ENCODE measurements at regions of chr2 and their contacts with region 1.

Region 1: GRCh38 chr2:55050133-55050994 is at the start of gene RTN4:
- DNase-seq: peak; percentile 99
- H3K4me3 Mint-ChIP-seq: peak within 1 kb of the TSS; percentile 98
- H3K27ac Mint-ChIP-seq: peak within 1 kb of the TSS; percentile 98
- H3K4me1 Mint-ChIP-seq: peaks cover 69% of the 10 kb centered on the region
- H3K27me3 Mint-ChIP-seq: no peaks in the 10 kb centered on the region
- total RNA-seq, gene RTN4: 81.2 and 83.0 TPM in 2 replicates

Region 2: DNA sequence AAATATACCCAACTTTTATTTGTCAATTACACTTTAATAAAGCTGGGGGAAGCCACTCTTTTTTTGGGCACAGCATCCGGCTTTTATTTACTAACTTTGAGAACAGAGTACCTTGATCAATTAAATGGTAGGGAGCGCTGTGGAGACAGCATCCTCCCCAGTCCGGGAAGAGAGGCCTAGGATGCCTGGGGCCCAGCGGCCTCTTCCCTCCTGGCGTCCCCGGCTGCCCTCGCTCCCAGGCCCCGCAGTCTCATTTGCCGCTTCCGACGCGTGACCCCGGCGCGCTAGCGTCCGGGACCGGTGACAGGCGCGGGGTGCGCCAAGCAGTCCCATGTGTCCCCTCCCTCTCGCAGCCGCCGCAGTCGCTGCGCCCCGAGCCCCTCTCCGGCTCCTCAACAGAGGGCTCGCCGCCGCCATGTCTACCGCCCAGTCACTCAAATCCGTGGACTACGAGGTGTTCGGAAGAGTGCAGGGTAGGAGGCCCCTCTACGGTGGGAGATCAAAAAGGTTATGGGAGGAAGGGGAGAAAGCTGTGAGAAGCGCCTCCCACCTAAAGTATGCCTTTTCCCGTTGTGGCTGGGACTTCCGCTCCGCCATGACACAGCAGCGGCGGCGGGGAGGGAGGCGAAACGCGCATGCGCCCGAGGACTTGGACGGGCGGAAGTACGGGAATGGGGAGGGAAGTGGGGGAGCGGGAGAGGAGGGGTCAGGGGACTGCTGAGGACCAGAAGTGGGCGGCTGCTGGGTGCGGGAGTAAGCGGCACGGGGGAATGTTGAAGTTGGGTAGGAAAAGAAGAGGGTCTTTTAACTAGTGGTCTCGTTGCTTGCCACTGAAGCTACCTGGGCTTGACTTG is 934.9 kb before region 1 on chr2 and contains the start of gene ACYP2:
- intact Hi-C with region 1: loop called (anchors 1 kb)
- DNase-seq: peak; percentile 88
- H3K4me3 Mint-ChIP-seq: peak within 1 kb of the TSS; percentile 92
- H3K27ac Mint-ChIP-seq: peak within 1 kb of the TSS; percentile 97
- H3K4me1 Mint-ChIP-seq: peaks cover 14% of the 10 kb centered on the region
- H3K27me3 Mint-ChIP-seq: peaks cover 7% of the 10 kb centered on the region
- total RNA-seq, gene ACYP2: 5.2 and 5.9 TPM in 2 replicates

Region 3: DNA sequence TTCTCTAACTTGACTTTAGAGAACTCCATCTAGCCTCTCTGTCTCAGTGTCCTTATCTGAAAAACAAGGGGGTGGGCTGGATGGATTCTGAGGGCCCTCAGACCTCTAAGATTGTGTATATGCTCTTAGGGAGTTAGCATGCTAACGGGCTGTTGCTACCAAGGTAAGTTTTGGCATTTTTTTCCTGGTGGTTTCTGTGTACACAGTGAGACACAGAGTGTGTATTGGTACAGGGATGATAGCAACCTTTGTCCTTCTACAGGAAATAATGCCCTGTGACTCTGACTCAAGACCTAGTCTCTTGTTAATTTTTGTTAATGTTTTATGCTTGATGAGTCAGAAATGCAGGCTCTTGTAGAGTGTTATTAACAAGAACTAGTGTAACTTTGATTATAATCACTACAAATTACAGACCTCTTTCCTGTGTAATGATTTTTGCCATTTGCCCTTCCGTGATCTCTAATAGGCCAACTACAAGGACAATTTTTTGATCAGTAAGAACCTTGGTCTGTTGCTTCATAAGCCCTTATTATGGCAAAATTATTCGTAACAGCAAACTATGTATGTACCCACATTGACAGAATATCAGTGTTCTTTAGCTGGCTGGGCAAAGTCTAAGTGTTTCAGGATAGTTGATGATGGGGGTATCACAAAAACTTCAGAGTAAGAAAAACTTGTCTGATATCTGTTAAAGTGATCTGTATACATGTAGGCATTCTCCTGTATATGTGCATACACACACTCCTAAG is 504.5 kb before region 1 on chr2:
- intact Hi-C with region 1: no loop called
- DNase-seq: no peak
- H3K4me3 Mint-ChIP-seq: no peak overlapping the region
- H3K27ac Mint-ChIP-seq: no peak overlapping the region
- H3K4me1 Mint-ChIP-seq: peaks cover 29% of the 10 kb centered on the region
- H3K27me3 Mint-ChIP-seq: peaks cover 3% of the 10 kb centered on the region

Region 4: GRCh38 chr2:54899576-54900200 is 150.7 kb before region 1 on chr2:
- intact Hi-C with region 1: loop called (anchors 5 kb)
- DNase-seq: no peak
- H3K4me3 Mint-ChIP-seq: no peak overlapping the region
- H3K27ac Mint-ChIP-seq: no peak overlapping the region
- H3K4me1 Mint-ChIP-seq: peaks cover 24% of the 10 kb centered on the region
- H3K27me3 Mint-ChIP-seq: no peaks in the 10 kb centered on the region

Region 5: GRCh38 chr2:55168221-55169154 is 118.1 kb after region 1 on chr2:
- intact Hi-C with region 1: loop called (anchors 1 kb)
- DNase-seq: peak; percentile 10
- H3K4me3 Mint-ChIP-seq: no peak overlapping the region
- H3K27ac Mint-ChIP-seq: no peak overlapping the region
- H3K4me1 Mint-ChIP-seq: peaks cover 6% of the 10 kb centered on the region
- H3K27me3 Mint-ChIP-seq: no peaks in the 10 kb centered on the region

Region 6: GRCh38 chr2:55268907-55269644 is 218.7 kb after region 1 on chr2 and contains the start of gene MTIF2:
- intact Hi-C with region 1: loop called (anchors 1 kb)
- DNase-seq: peak; percentile 87
- H3K4me3 Mint-ChIP-seq: peak within 1 kb of the TSS; percentile 93
- H3K27ac Mint-ChIP-seq: peak within 1 kb of the TSS; percentile 85
- H3K4me1 Mint-ChIP-seq: peaks cover 14% of the 10 kb centered on the region
- H3K27me3 Mint-ChIP-seq: no peaks in the 10 kb centered on the region
- total RNA-seq, gene MTIF2: 42.3 and 44.1 TPM in 2 replicates

Region 7: GRCh38 chr2:55519938-55520885 is 469.8 kb after region 1 on chr2:
- intact Hi-C with region 1: loop called (anchors 1 kb)
- DNase-seq: peak; percentile 15
- H3K4me3 Mint-ChIP-seq: peak overlapping the region; percentile 97
- H3K27ac Mint-ChIP-seq: peak overlapping the region; percentile 95
- H3K4me1 Mint-ChIP-seq: peaks cover 17% of the 10 kb centered on the region
- H3K27me3 Mint-ChIP-seq: no peaks in the 10 kb centered on the region